ENCODE measurements at regions of chr5 and their contacts with region 1.

Region 1: GRCh38 chr5:108642167-108642906 is 105.4 kb upstream of the FER start:
- DNase-seq: no peak
- H3K4me3 ChIP-seq: no peak overlapping the region
- CTCF ChIP-seq: peak; percentile 76

Region 2: DNA sequence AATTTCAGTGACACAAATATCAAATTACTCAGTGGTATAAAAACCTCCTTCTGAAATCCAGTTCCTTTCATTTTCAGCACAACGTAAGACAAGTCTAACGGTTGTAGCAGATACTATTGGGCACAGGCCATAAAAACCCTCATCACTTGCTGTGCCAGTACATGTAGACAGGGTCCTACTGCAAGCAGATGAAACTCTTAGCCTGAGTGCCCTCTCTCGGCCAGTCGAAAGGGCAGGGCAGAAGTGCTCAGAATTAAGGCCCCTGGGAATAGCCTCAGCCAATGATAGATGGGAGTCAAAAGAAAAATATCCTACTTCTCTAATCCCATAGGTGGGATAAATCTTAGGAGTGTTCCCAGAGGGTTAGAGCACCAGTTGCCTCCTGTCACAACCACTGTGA is 63.1 kb before region 1 on chr5:
- CTCF ChIA-PET with region 1: no interaction called
- POLR2A ChIA-PET with region 1: no interaction called
- DNase-seq: no peak
- H3K4me3 ChIP-seq: no peak overlapping the region
- CTCF ChIP-seq: no peak

Region 3: DNA sequence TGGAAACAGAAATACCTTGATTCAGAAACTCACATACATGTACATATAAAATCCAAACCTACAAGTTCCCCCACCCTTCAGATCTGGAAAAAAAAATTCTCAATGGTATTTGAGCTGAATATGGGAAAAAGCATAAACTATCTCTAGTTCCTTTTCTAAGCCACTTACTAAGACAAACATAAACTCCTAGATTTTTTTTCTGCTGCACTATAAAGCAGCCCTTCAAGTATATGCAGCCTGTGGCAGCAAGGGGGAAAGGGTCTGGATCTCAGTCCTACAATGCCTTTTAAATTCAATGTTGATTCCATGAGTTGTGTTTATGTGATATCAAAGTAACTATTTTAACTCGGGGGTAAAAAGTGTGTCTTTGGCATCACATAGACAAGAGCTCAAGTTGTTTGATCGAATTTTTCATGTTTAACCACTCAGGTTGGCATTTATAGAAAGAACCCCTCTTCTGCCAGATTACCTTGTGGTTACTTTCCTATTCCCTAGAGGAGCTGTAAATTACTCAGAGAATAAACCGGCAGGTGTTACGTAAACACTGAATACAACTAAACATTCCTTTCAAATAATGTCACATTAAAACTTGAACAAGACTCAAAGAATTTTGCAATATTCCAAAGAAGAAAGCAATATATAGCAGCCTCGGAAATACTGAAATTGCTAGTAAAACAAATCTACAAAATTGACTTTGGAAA is 13.6 kb after region 1 on chr5:
- CTCF ChIA-PET with region 1: interaction called, 19 read pairs
- POLR2A ChIA-PET with region 1: no interaction called
- DNase-seq: no peak
- H3K4me3 ChIP-seq: no peak overlapping the region
- CTCF ChIP-seq: no peak

Region 4: DNA sequence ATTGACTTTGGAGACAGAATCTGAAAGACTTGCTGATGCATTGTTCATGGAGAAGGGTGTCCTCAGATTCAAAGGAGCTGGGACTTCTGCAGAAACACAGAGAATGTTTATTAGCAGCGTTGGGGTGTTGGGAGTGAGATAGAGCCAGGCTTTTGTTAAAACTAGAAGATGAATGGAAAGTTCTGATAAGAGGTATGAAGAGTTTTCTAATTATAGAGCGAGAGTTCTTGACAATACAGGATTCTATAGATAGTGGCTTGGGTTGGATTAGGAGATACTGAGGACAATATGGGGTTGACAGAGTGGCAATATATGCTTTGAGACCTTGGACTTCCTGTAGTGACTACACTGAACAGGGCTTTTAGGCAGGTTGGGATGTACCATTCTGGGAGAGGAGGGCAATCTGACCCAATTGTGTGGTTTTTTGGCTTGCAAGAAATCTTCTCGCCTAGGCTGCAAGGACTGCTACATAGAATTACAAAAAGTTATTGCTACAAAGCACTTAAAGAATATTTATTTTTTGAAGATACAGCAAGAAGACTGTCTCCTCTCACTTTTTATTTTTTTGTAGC is 188.5 kb after region 1 on chr5:
- CTCF ChIA-PET with region 1: no interaction called
- POLR2A ChIA-PET with region 1: no interaction called
- DNase-seq: no peak
- H3K4me3 ChIP-seq: no peak overlapping the region
- CTCF ChIP-seq: no peak

Region 5: GRCh38 chr5:109479260-109479860 is 837.0 kb after region 1 on chr5:
- CTCF ChIA-PET with region 1: interaction called, 22 read pairs
- POLR2A ChIA-PET with region 1: no interaction called
- DNase-seq: no peak
- H3K4me3 ChIP-seq: no peak overlapping the region
- CTCF ChIP-seq: peak; percentile 28